Left ventricle myocardium superior (tissue), 1 donor: ENCODE measurements at regions of chr10 and their contacts with region 1.

Region 1: DNA sequence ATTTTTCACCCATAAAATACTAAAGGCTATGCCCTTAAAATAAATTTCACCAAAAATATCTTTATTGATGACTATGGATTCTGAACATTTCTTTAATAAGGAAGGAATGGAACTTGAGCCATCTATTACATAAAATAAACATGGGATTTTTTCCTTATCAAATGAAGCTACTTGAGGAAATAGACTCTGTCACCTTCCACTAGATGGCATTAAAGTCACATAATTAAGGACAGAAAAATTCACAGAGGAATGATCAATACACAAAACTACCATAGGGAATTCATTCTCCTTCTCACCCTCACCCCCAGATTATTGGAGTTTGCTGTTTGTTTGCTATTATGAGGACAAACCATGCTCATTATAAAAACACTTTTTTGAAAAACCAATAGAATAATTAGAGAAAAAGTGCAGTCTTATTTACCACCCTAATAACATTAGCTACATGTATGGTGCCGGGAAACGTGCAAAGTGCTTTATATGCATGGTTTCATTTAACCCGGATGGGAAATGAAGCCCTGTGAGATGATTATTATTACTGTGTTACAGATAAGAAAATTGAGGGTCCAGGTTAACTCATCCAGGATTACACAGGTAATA is 21.1 kb upstream of the FOXI2 start:
- DNase-seq: no peak
- ATAC-seq: no peak

Region 2: DNA sequence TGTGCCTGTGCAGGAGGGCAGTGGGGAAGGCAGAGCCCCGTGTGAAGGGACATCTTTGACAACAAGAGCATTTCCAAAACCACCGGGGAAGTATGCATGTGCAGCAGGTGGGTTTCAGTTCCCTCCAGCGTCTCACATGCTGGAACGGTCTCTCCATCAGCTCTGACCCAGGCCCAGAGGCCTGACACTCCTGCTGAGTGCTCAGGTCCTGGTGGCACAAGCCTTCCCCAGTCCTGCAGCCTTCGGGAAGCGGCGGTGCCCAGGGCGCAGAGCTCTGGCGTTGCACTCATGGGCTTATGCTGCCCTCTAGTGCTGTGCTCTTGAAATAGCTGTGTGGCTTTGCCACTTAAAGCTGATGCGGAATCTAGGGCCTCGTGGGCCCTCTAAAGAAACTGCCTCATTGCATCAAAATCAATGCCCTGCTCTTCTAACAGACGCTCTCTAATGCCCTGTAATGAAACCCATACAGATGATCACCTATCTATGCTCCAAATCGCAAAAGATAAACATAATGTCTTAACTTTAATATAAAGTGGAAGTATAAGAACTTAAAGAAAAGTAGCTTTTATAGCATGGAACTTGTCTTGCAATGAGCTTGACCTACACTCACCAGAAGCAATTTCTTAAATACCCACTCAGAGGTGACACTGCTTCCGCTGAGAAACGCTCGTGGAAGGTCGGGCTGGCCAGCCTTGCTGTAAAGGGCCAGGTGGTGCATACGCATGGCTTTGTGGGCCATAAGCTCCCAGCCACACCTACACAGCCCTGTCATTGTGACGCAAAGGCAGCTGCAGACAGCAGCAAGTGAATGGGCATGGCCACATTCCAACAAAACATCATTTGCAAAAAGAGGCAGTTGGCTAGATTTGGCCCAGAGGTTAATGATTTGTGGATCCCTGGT is 138.2 kb after region 1 on chr10:
- intact Hi-C with region 1: loop called (anchors 5 kb)
- DNase-seq: peak; percentile 71
- ATAC-seq: peak; percentile 94